HEK293T (cell line): ENCODE measurements at regions of chr4 and their contacts with region 1.

Region 1: GRCh38 chr4:6873792-6874461 is 35.7 kb upstream of the TBC1D14 start:
- DNase-seq: peak; percentile 77

Region 2: GRCh38 chr4:6716018-6716911 is 157.7 kb before region 1 on chr4 and contains the start of gene BLOC1S4:
- CTCF ChIA-PET with region 1: interaction called, 40 read pairs
- POLR2A ChIA-PET with region 1: interaction called, 10 read pairs
- DNase-seq: peak; percentile 96

Region 3: GRCh38 chr4:6768539-6768905 is 105.4 kb before region 1 on chr4:
- CTCF ChIA-PET with region 1: interaction called, 11 read pairs
- POLR2A ChIA-PET with region 1: no interaction called
- DNase-seq: no peak

Region 4: GRCh38 chr4:6885951-6886557 is 12.1 kb after region 1 on chr4:
- CTCF ChIA-PET with region 1: interaction called, 10 read pairs
- POLR2A ChIA-PET with region 1: no interaction called
- DNase-seq: no peak

Region 5: GRCh38 chr4:6942238-6942800 is 68.4 kb after region 1 on chr4:
- CTCF ChIA-PET with region 1: no interaction called
- POLR2A ChIA-PET with region 1: no interaction called
- DNase-seq: no peak

Region 6: GRCh38 chr4:7243609-7244330 is 369.8 kb after region 1 on chr4:
- CTCF ChIA-PET with region 1: no interaction called
- POLR2A ChIA-PET with region 1: no interaction called
- DNase-seq: no peak